ENCODE measurements at regions of chrX and their contacts with region 1.

Region 1: GRCh38 chrX:135185795-135186443 is 14.7 kb upstream of the CT55 start:
- DNase-seq: no peak
- ATAC-seq: peak in 4 of 8 donors; percentile 64 to 87 (median 68)
- H3K4me3 ChIP-seq: no peak overlapping the region
- H3K27ac ChIP-seq: no peak overlapping the region
- H3K4me1 ChIP-seq: no peaks in the 10 kb centered on the region
- H3K27me3 ChIP-seq: peaks cover 0 to 51% (median 0%) of the 10 kb centered on the region in 7 donors
- CTCF ChIP-seq: peak; percentile 15 to 59 (median 51)

Region 2: GRCh38 chrX:134963041-134963440 is 222.9 kb before region 1 on chrX:
- intact Hi-C with region 1: loop called in 1 of 10 experiments (anchors 5 kb)
- DNase-seq: no peak
- ATAC-seq: no peak
- H3K4me3 ChIP-seq: no peak overlapping the region
- H3K27ac ChIP-seq: no peak overlapping the region
- H3K4me1 ChIP-seq: no peaks in the 10 kb centered on the region
- H3K27me3 ChIP-seq: peaks cover 0 to 44% (median 0%) of the 10 kb centered on the region in 7 donors
- CTCF ChIP-seq: no peak

Region 3: DNA sequence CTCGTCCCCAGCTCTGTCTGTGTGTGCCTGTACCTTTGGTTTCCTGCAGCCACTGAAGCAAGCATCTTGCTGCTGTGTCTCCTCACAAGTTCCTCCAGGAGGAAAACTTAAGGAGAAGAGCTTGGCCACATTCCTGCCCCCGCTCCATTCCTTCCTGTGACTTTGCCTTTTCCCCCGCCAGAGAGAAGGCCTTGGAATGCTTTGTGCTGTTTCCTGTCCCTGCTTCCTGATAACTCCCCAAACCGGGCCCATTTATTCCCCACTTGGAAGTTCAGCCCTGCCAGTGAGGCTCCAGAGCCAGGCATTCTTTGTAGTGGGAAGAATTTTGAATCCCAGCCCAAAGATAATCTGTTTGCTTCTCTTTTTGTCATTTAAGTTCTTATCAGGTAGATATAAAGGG is 268.9 kb after region 1 on chrX:
- intact Hi-C with region 1: no loop called
- DNase-seq: peak in 1 of 2 donors; percentile 18
- ATAC-seq: peak in 5 of 8 donors; percentile 30 to 54 (median 38)
- H3K4me3 ChIP-seq: no peak overlapping the region
- H3K27ac ChIP-seq: peak overlapping the region in 3 of 10 donors; percentile 9 to 39 (median 16)
- H3K4me1 ChIP-seq: peaks cover 0 to 18% (median 0%) of the 10 kb centered on the region in 9 donors
- H3K27me3 ChIP-seq: peaks cover 0 to 3% (median 0%) of the 10 kb centered on the region in 7 donors
- CTCF ChIP-seq: no peak

Region 4: GRCh38 chrX:135477576-135477975 is 291.7 kb after region 1 on chrX:
- intact Hi-C with region 1: loop called in 5 of 10 experiments (anchors 2 to 5 kb)
- DNase-seq: peak; percentile 49 to 81
- ATAC-seq: peak; percentile 56 to 79 (median 62)
- H3K4me3 ChIP-seq: no peak overlapping the region
- H3K27ac ChIP-seq: no peak overlapping the region
- H3K4me1 ChIP-seq: no peaks in the 10 kb centered on the region
- H3K27me3 ChIP-seq: peaks cover 0 to 30% (median 0%) of the 10 kb centered on the region in 7 donors
- CTCF ChIP-seq: peak in 7 of 9 donors; percentile 24 to 55 (median 42)

Measured in heart right ventricle (tissue), 16 donors.